ENCODE measurements at regions of chr20 and their contacts with region 1.

Region 1: DNA sequence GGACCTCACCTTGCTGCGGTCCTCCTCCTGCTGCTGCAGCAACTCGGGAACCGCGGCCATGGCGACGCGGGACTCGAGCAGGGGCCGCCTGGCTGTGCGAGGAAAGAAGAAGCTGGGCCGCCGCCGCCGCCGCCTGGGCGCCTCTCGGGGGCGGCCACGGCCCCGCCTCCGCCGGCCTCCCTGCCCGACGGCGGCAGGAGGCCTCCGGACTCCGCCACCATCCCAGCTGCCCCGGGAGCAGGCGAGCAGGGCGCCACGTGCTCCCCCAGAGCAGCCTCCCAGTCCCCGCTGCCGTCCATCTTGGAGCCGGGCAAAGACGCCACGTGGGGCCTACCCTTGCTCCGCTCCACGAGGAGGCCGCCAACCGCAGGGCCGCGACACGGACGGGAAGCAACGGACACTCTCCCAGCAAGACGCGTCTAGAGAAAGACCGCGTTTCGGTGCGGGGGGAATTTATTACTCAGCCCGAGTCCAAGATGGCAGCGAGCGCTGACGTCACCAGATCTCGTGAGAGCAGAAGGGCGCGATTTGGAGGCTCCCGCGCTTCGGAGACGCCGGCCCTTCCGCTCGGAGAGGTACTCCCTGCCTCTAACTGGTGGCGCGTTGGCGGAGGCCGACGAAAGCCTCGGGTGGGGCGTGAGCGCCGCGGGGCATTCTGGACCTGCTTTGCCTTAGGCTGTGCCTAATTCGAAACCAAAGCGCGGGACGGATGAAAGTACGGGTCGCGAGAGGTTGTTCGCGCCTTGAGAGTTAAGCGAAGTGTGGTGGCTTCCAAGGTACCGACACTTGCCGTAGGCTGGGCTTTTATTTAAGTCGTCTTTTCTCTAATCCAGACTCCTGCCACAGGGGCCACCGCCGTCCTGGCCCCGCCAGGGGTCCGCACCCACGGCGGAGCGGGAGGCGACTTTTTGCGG is at the starts of genes MGME1 and SNX5:
- DNase-seq: peak; percentile 95
- H3K4me3 ChIP-seq: peak within 1 kb of the TSS; percentile 74 to 99
- H3K27ac ChIP-seq: peak within 1 kb of the TSS; percentile 96 to 100
- H3K4me1 ChIP-seq: peaks cover 32% of the 10 kb centered on the region in 2 experiments; a peak in 3 of 4 replicates
- H3K27me3 ChIP-seq: no peaks in the 10 kb centered on the region
- CTCF ChIP-seq: no peak
- EP300 ChIP-seq: peak in 1 of 2 experiments; percentile 4; a peak in 2 of 4 replicates
- RAD21 ChIP-seq: no peak
- polyA plus RNA-seq, gene MGME1: 7.9 and 10.2 TPM in 2 replicates
- polyA plus RNA-seq, gene SNX5: 69.2 and 76.2 TPM in 2 replicates

Region 2: GRCh38 chr20:17381724-17382123 is 586.9 kb before region 1 on chr20:
- CTCF ChIA-PET with region 1: no interaction called
- POLR2A ChIA-PET with region 1: no interaction called
- DNase-seq: no peak
- H3K4me3 ChIP-seq: no peak overlapping the region
- H3K27ac ChIP-seq: no peak overlapping the region
- H3K4me1 ChIP-seq: no peaks in the 10 kb centered on the region
- H3K27me3 ChIP-seq: no peaks in the 10 kb centered on the region
- CTCF ChIP-seq: no peak
- EP300 ChIP-seq: no peak
- RAD21 ChIP-seq: no peak

Region 3: GRCh38 chr20:17938871-17939619 is 29.6 kb before region 1 on chr20:
- CTCF ChIA-PET with region 1: interaction called, 16 read pairs
- POLR2A ChIA-PET with region 1: no interaction called
- DNase-seq: peak; percentile 80
- H3K4me3 ChIP-seq: no peak overlapping the region; a peak in 1 of 4 replicates
- H3K27ac ChIP-seq: no peak overlapping the region
- H3K4me1 ChIP-seq: peaks cover 0 to 11% of the 10 kb centered on the region in 2 experiments; a peak in 1 of 4 replicates
- H3K27me3 ChIP-seq: no peaks in the 10 kb centered on the region
- CTCF ChIP-seq: peak; percentile 77
- EP300 ChIP-seq: no peak
- RAD21 ChIP-seq: peak; percentile 84

Region 4: GRCh38 chr20:17958373-17959256 is 10.0 kb before region 1 on chr20:
- CTCF ChIA-PET with region 1: interaction called, 11 read pairs
- POLR2A ChIA-PET with region 1: interaction called, 5 read pairs
- DNase-seq: no peak
- H3K4me3 ChIP-seq: no peak overlapping the region
- H3K27ac ChIP-seq: peak overlapping the region; percentile 37 to 56
- H3K4me1 ChIP-seq: peaks cover 13 to 14% of the 10 kb centered on the region in 2 experiments; a peak in 3 of 4 replicates
- H3K27me3 ChIP-seq: no peaks in the 10 kb centered on the region
- CTCF ChIP-seq: peak; percentile 31
- EP300 ChIP-seq: no peak
- RAD21 ChIP-seq: no peak

Measured in SK-N-SH (cell line).